ENCODE measurements at regions of chr7 and their contacts with region 1.

Region 1: GRCh38 chr7:23546897-23547572 is 15.3 kb upstream of the TRA2A start:
- DNase-seq: peak; percentile 59 to 92 (median 75)
- ATAC-seq: peak; percentile 95
- H3K4me3 ChIP-seq: no peak overlapping the region
- H3K4me3 Mint-ChIP-seq: no peak overlapping the region
- H3K27ac ChIP-seq: no peak overlapping the region
- H3K27ac Mint-ChIP-seq: no peak overlapping the region
- H3K4me1 ChIP-seq: no peaks in the 10 kb centered on the region
- H3K4me1 Mint-ChIP-seq: peaks cover 9% of the 10 kb centered on the region
- H3K27me3 ChIP-seq: no peaks in the 10 kb centered on the region
- H3K27me3 Mint-ChIP-seq: no peaks in the 10 kb centered on the region
- CTCF ChIP-seq: peak; percentile 97

Region 2: GRCh38 chr7:23013715-23014649 is 533.1 kb before region 1 on chr7 and contains the start of gene HYCC1:
- CTCF ChIA-PET with region 1: no interaction called
- POLR2A ChIA-PET with region 1: no interaction called
- intact Hi-C with region 1: loop called in 1 of 2 experiments (anchors 10 kb)
- DNase-seq: peak; percentile 97 to 99 (median 99)
- ATAC-seq: peak; percentile 97
- H3K4me3 ChIP-seq: peak within 1 kb of the TSS; percentile 65 to 95
- H3K4me3 Mint-ChIP-seq: peak within 1 kb of the TSS; percentile 97
- H3K27ac ChIP-seq: peak within 1 kb of the TSS; percentile 48 to 63
- H3K27ac Mint-ChIP-seq: peak within 1 kb of the TSS; percentile 89
- H3K4me1 ChIP-seq: peaks cover 21% of the 10 kb centered on the region
- H3K4me1 Mint-ChIP-seq: peaks cover 20% of the 10 kb centered on the region
- H3K27me3 ChIP-seq: no peaks in the 10 kb centered on the region
- H3K27me3 Mint-ChIP-seq: peaks cover 3% of the 10 kb centered on the region
- CTCF ChIP-seq: peak; percentile 60
- total RNA-seq, gene HYCC1: 10.7 to 13.5 TPM

Region 3: DNA sequence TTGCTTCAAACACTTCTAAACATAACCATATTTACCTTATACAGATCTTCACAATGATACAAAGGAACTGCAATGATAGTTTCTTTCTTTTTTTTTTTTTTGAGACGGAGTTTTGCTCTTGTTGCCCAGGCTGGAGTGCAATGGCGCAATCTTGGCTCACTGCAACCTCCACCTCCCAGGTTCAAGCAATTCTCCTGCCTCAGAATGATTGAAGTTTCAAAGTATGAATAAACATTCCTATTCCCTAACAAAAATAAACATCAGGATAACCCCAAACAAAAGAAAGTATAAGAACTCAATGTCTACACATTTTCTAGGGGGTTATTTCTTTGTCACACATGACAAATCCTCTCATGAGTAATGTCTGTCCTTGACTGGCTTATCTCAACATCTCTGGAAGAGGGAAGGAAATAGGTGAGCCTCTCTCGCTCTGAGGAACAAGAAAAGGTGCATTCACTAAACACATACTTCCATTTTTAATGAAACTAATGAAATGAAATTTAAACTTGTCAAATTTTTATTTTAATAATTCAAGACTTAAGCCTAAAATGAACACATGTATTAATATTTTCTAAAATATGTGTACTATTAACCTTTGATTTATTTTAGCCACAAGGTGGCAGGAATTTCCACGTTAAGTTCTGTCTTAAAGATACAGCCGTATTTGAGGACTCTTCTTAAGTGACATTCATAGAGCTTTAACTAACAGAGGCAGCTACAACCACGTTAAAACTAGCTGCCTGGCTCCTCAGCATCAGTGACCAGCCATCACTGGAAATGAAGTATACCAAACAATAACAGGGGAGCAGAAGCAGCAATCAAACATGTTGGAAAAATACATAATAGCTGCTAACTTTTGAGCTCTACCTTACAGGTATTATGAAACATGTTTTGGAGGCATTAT is 189.6 kb before region 1 on chr7:
- CTCF ChIA-PET with region 1: interaction called, 10 read pairs
- POLR2A ChIA-PET with region 1: interaction called, 3 read pairs
- intact Hi-C with region 1: loop called (anchors 1 to 2 kb)
- DNase-seq: peak in 2 of 9 experiments; percentile 26 to 51
- ATAC-seq: peak; percentile 36
- H3K4me3 ChIP-seq: no peak overlapping the region
- H3K4me3 Mint-ChIP-seq: no peak overlapping the region
- H3K27ac ChIP-seq: no peak overlapping the region
- H3K27ac Mint-ChIP-seq: no peak overlapping the region
- H3K4me1 ChIP-seq: peaks cover 4% of the 10 kb centered on the region
- H3K4me1 Mint-ChIP-seq: peaks cover 12% of the 10 kb centered on the region
- H3K27me3 ChIP-seq: peaks cover 0 to 8% of the 10 kb centered on the region in 2 experiments
- H3K27me3 Mint-ChIP-seq: peaks cover 12% of the 10 kb centered on the region
- CTCF ChIP-seq: peak; percentile 50

Region 4: GRCh38 chr7:23394488-23395171 is 152.4 kb before region 1 on chr7:
- CTCF ChIA-PET with region 1: no interaction called
- POLR2A ChIA-PET with region 1: no interaction called
- intact Hi-C with region 1: no loop called
- DNase-seq: no peak
- ATAC-seq: no peak
- H3K4me3 ChIP-seq: no peak overlapping the region
- H3K4me3 Mint-ChIP-seq: no peak overlapping the region
- H3K27ac ChIP-seq: no peak overlapping the region
- H3K27ac Mint-ChIP-seq: no peak overlapping the region
- H3K4me1 ChIP-seq: no peaks in the 10 kb centered on the region
- H3K4me1 Mint-ChIP-seq: no peaks in the 10 kb centered on the region
- H3K27me3 ChIP-seq: no peaks in the 10 kb centered on the region
- H3K27me3 Mint-ChIP-seq: peaks cover 2% of the 10 kb centered on the region
- CTCF ChIP-seq: no peak

Region 5: DNA sequence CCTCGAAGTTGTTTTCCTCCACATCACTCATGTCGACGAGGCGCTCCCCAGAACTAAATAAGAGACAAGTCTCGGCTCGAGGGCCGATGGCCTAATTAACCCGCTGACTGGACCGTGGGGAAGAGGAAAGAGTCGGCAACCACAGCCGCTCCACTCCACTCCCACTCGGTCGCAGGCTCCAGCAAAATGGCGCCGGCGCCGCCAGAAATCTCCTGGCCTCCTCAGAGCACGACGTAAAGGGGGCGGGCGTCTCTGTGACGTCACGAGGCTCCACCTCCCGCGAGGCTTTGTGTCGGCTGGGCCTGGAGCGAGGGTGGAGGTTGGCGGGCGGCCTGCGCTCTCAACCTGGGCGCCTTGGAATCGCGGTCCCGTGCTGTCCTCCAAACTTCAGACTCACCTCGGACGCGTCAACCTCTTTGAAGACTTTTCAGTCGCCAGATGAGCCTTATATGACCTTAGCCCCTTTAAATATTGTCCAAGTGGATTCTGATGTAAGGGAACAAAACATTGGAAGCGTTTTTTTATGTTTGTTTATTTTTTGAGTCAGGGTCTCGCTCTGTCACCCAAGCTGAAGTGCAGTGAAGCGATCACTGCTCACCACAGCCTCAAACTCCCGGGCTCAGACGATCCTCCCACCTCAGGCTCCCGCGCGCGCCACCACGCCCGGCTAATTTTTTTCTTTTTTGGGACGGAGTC is 15.1 kb before region 1 on chr7 and contains the start of gene TRA2A:
- CTCF ChIA-PET with region 1: interaction called, 23 read pairs
- POLR2A ChIA-PET with region 1: interaction called, 12 read pairs
- intact Hi-C with region 1: loop called (anchors 2 kb)
- DNase-seq: peak; percentile 93 to 98 (median 97)
- ATAC-seq: peak; percentile 89
- H3K4me3 ChIP-seq: peak within 1 kb of the TSS; percentile 94 to 100
- H3K4me3 Mint-ChIP-seq: peak within 1 kb of the TSS; percentile 99
- H3K27ac ChIP-seq: peak within 1 kb of the TSS; percentile 97 to 100
- H3K27ac Mint-ChIP-seq: peak within 1 kb of the TSS; percentile 100
- H3K4me1 ChIP-seq: peaks cover 31% of the 10 kb centered on the region
- H3K4me1 Mint-ChIP-seq: peaks cover 42% of the 10 kb centered on the region
- H3K27me3 ChIP-seq: no peaks in the 10 kb centered on the region
- H3K27me3 Mint-ChIP-seq: no peaks in the 10 kb centered on the region
- CTCF ChIP-seq: no peak
- total RNA-seq, gene TRA2A: 258 to 271 TPM

Region 6: DNA sequence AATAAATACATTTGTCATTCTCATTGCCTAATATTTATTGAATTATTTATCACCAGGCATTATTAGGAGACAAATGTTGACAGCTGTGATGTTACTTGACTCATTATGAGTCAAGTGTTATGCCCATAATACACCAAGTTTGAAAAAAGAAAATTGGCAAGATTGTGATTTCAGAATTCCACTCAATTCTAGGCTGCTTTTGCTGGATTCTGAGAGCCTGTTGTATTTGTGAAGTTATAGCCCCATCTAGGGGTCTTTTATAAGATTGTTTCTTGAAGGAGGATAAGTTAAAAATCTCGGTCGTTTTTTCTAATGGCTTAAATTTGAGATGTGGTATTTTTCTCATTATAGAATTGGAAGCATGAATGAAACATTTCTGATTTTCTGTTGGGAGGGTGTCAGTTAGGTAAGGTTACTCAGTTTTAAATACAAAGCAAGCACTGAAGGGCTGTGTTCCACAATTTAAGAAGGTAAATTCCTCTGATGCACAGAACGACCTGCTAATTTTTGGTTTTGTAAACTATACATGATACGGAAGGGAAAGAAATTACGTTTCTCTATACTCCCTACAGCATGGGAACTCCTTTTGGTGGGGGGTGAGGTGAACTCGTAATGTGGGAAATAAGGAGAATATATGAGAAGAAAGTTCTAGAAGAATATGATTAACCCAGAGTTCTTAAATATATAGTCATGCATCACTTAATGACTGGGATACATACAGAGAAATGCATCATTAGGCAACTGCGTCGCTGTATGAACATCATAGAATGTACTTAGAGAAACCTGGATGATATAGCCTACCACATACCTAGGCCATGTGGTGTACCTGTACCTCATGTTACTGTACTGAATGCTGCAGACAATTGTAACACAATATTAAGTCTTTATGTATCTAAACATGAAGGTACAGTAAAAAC is 165.6 kb after region 1 on chr7:
- CTCF ChIA-PET with region 1: interaction called, 61 read pairs
- POLR2A ChIA-PET with region 1: no interaction called
- intact Hi-C with region 1: loop called (anchors 1 kb)
- DNase-seq: peak in 2 of 9 experiments; percentile 59 to 68
- ATAC-seq: no peak
- H3K4me3 ChIP-seq: no peak overlapping the region
- H3K4me3 Mint-ChIP-seq: no peak overlapping the region
- H3K27ac ChIP-seq: no peak overlapping the region
- H3K27ac Mint-ChIP-seq: no peak overlapping the region
- H3K4me1 ChIP-seq: no peaks in the 10 kb centered on the region
- H3K4me1 Mint-ChIP-seq: no peaks in the 10 kb centered on the region
- H3K27me3 ChIP-seq: no peaks in the 10 kb centered on the region
- H3K27me3 Mint-ChIP-seq: no peaks in the 10 kb centered on the region
- CTCF ChIP-seq: peak; percentile 74

Region 7: DNA sequence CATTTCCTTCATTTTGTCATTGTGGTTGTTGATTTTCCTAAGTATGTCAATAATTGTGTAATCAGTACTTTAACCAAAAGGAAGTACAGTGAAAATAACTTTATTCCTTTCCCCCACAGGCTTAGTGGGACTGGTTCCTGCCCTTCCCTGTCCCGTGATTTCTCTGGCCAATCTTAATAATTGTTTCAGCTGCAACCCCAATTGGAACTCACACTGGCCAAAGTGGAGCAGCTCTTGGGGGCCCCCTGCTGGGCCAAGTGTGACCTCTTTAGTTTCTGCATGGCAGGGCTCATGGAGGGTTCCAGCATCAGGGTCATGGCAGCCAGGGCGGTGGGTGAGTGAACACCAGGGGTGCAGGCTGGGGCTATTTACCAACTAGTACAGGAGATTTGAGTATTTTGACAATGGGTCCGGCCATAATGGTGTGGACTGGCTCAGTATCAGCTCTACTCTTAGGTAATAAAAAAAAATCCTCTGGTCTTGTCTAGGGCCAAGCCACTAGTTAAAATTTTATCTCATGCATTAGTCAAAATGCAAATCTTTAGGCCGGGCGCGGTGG is 1546.3 kb after region 1 on chr7:
- CTCF ChIA-PET with region 1: no interaction called
- POLR2A ChIA-PET with region 1: no interaction called
- intact Hi-C with region 1: loop called in 1 of 2 experiments (anchors 10 kb)
- DNase-seq: peak; percentile 51 to 82 (median 75)
- ATAC-seq: peak; percentile 88
- H3K4me3 ChIP-seq: no peak overlapping the region
- H3K4me3 Mint-ChIP-seq: no peak overlapping the region
- H3K27ac ChIP-seq: no peak overlapping the region
- H3K27ac Mint-ChIP-seq: no peak overlapping the region
- H3K4me1 ChIP-seq: peaks cover 3% of the 10 kb centered on the region
- H3K4me1 Mint-ChIP-seq: peaks cover 6% of the 10 kb centered on the region
- H3K27me3 ChIP-seq: no peaks in the 10 kb centered on the region
- H3K27me3 Mint-ChIP-seq: peaks cover 2% of the 10 kb centered on the region
- CTCF ChIP-seq: peak; percentile 77

Measured in CD8-positive, alpha-beta T cell (primary cell).